ENCODE measurements at regions of chr14 and their contacts with region 1.

Region 1: DNA sequence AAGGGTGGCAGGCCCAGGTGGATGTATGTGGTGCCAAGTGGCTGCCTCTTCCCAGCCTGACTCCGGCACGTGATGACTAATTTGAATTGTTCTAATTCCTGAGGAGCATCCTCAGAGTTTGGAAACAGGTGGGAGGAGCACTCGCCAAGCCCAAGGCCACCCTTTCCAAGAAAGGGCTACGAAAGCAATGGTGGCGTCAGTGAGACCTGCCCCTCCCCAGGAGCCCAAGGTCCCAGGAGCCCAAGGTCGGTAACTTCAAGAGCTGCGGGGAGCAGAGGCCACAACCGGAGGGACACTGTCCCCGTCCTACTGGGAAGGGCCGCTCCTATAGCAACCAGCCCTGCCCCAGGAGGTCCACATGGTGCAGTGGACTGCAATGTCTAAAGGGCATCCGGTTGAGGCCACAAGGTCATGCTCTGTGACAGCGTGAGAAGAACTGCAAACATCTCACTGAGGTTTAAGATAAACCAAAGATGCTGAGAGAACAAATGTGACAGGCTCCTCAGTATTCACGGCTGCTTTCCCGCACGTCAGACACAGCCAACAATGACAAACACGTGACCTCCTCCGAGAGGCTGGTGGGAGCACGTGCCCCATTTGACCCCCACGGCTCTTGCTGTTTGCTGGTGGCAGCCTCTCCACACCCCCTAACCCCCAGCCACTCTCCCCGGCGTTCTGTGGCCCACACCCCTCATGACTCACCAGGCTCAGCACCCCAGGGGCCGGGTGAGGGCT is 79.6 kb downstream of the ITPK1 start:
- DNase-seq: peak in 9 of 10 donors; percentile 83 to 95 (median 93)
- H3K4me3 ChIP-seq: peak overlapping the region in 15 of 59 donors; percentile 6 to 52 (median 34)
- H3K27ac ChIP-seq: peak overlapping the region; percentile 84 to 100 (median 98)
- H3K27me3 ChIP-seq: no peaks in the 10 kb centered on the region
- CTCF ChIP-seq: peak in 5 of 56 donors; percentile 8 to 27 (median 17)

Region 2: DNA sequence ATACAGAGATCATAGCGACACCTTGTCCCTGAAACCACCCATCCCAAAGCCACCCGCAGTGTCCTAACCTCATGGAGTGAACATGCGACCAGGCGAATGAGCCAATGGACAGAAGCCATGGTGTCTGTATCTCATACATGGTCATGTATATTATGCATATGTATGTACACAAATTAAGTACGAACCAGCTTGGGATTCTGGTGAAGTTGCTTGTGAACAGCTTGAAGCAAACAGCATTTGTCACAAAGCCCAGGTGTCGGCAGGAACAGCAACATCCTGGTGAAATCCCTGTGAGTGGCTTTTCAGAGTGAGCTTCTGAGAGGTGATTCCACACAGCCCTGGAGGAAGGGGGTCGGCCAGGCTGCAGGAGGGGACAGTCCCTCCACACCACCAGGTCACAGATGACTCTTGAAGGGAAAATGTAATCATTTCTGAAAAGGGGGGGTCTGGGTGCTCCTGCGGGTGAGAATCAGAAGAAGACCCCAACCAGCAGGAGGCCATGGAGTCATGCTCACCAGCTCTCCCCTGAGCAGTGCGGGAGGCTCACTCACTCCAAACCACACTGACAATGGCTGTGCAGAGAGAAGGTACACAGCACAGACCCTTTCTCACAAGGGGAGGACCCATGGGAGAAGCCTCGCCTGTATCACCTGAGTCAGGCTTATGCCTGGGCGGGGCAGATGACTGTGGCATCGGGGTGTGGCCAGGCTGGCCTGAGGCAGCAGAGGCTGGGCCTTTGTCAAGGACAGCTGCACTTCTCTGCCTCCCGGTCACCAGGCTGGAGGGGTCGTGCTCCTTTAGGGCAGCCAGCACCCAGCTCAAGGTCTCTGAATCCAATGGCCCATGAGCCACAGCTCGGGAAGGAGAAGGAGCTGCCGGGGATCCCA is 98.8 kb before region 1 on chr14:
- intact Hi-C with region 1: no loop called
- DNase-seq: peak in 1 of 10 donors; percentile 42
- H3K4me3 ChIP-seq: no peak overlapping the region
- H3K27ac ChIP-seq: peak overlapping the region in 23 of 59 donors; percentile 11 to 71 (median 38)
- H3K27me3 ChIP-seq: no peaks in the 10 kb centered on the region
- CTCF ChIP-seq: no peak

Region 3: DNA sequence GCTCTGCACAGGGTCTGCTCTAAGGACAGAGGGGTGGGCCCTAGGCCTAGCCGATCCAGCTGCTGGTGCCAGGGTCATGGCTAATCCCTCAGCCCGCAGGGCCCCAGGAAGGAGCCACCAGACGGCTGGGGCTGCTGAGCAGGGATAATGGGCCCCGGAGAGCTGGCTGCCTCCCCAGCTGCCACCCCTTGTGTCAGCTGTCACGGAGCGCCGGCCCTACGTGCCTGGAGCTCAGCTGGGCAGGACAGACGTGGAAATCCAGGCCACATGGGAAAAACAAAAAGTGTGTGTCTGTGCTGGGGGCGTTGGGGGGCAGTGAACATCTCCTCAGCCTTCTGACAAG is 76.9 kb before region 1 on chr14:
- intact Hi-C with region 1: loop called in 1 of 2 experiments (anchors 2 kb)
- DNase-seq: peak in 9 of 10 donors; percentile 64 to 83 (median 78)
- H3K4me3 ChIP-seq: peak overlapping the region in 6 of 59 donors; percentile 1 to 25 (median 4)
- H3K27ac ChIP-seq: peak overlapping the region; percentile 79 to 99 (median 95)
- H3K27me3 ChIP-seq: no peaks in the 10 kb centered on the region
- CTCF ChIP-seq: peak in 4 of 56 donors; percentile 5 to 21 (median 12)

Region 4: DNA sequence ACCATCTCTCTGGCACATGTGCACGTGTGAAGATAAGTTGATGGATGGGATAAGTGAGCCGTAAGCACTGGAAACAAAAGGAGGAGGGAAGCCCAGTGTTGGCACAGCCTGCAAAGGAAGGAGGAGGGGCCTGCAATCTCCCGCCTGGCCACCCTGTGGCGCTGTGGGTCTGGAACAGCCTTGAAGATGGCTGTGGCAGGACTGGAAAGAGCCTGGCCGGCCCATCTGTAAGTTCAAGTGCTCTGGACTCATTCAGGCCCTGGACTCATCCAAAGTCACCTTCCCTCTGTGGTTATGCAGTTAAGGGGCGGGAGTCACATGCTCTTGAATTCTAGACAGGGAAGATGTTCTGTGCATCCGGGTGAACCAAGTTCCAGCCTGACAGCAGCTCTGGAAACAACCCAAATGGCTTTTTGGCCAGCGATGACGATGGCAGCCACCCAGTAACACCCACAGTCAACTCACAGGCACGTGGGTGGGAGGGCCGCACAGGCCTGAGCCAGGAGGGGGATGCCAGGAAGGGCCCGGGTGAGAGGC is 62.8 kb before region 1 on chr14:
- intact Hi-C with region 1: loop called in 1 of 2 experiments (anchors 1 kb)
- DNase-seq: peak; percentile 50 to 91 (median 86)
- H3K4me3 ChIP-seq: no peak overlapping the region
- H3K27ac ChIP-seq: peak overlapping the region; percentile 24 to 92 (median 85)
- H3K27me3 ChIP-seq: no peaks in the 10 kb centered on the region
- CTCF ChIP-seq: peak; percentile 67 to 95 (median 85)

Region 5: GRCh38 chr14:93231129-93231979 is 195.3 kb after region 1 on chr14:
- intact Hi-C with region 1: no loop called
- DNase-seq: peak in 9 of 10 donors; percentile 32 to 87 (median 74)
- H3K4me3 ChIP-seq: peak overlapping the region; percentile 22 to 80 (median 56)
- H3K27ac ChIP-seq: peak overlapping the region in 32 of 59 donors; percentile 4 to 81 (median 48)
- H3K27me3 ChIP-seq: no peaks in the 10 kb centered on the region
- CTCF ChIP-seq: no peak